ENCODE measurements at regions of chr11 and their contacts with region 1.

Region 1: GRCh38 chr11:47186076-47186936 is at the start of gene PACSIN3:
- DNase-seq: peak; percentile 43 to 71
- ATAC-seq: peak; percentile 7 to 61 (median 37)
- H3K4me3 ChIP-seq: peak within 1 kb of the TSS; percentile 63 to 85 (median 72)
- H3K27ac ChIP-seq: peak within 1 kb of the TSS; percentile 89 to 100 (median 96)
- H3K4me1 ChIP-seq: peaks cover 9 to 75% (median 52%) of the 10 kb centered on the region in 9 donors
- H3K27me3 ChIP-seq: peaks cover 0 to 50% (median 0%) of the 10 kb centered on the region in 7 donors
- CTCF ChIP-seq: peak in 2 of 9 donors; percentile 14 to 26
- total RNA-seq, gene PACSIN3: 146 to 335 (median 257) TPM

Region 2: DNA sequence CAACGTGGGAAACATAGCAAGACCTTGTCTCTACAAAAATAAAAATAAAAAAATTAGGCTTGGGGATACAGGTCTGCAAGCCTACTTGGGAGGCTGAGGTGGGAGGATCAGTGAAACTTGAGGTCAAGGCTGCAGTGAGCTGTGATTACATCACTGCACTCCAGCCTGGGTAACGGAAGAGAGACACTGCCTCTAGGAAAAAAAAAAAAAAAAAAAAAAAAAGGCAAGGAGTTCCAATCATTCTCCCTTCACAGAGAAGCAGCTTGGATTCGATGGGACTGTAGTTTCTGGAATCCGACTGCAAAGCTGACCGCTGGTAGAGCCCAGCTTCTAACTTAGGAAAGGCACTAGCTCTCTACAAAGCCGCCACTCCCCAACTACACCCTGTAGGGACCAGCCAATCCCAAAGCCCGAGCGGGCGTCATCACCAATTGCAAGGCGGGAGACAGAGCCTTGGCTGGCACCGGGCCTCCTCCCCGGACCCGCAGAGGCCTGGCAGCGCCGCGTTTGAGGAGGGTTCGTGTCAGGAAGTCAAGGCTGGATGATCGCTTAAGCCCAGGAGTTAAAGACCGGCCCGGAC is 27.8 kb after region 1 on chr11:
- intact Hi-C with region 1: loop called in 6 of 10 experiments (anchors 1 to 2 kb)
- DNase-seq: peak; percentile 92
- ATAC-seq: peak; percentile 91 to 96 (median 94)
- H3K4me3 ChIP-seq: peak overlapping the region; percentile 49 to 85 (median 66)
- H3K27ac ChIP-seq: peak overlapping the region; percentile 76 to 97 (median 90)
- H3K4me1 ChIP-seq: peaks cover 11 to 47% (median 21%) of the 10 kb centered on the region in 9 donors
- H3K27me3 ChIP-seq: no peaks in the 10 kb centered on the region
- CTCF ChIP-seq: peak in 1 of 9 donors; percentile 6

Region 3: GRCh38 chr11:47233989-47234668 is 47.8 kb after region 1 on chr11:
- intact Hi-C with region 1: loop called in 1 of 10 experiments (anchors 10 kb)
- DNase-seq: peak; percentile 25 to 52
- ATAC-seq: peak; percentile 63 to 81 (median 74)
- H3K4me3 ChIP-seq: peak overlapping the region in 3 of 10 donors; percentile 2 to 13 (median 8)
- H3K27ac ChIP-seq: peak overlapping the region in 9 of 10 donors; percentile 47 to 73 (median 58)
- H3K4me1 ChIP-seq: peaks cover 5 to 33% (median 22%) of the 10 kb centered on the region in 9 donors
- H3K27me3 ChIP-seq: no peaks in the 10 kb centered on the region
- CTCF ChIP-seq: peak in 8 of 9 donors; percentile 18 to 59 (median 48)

Measured in heart right ventricle (tissue), 16 donors.